ENCODE measurements at regions of chr19 and their contacts with region 1.

Region 1: DNA sequence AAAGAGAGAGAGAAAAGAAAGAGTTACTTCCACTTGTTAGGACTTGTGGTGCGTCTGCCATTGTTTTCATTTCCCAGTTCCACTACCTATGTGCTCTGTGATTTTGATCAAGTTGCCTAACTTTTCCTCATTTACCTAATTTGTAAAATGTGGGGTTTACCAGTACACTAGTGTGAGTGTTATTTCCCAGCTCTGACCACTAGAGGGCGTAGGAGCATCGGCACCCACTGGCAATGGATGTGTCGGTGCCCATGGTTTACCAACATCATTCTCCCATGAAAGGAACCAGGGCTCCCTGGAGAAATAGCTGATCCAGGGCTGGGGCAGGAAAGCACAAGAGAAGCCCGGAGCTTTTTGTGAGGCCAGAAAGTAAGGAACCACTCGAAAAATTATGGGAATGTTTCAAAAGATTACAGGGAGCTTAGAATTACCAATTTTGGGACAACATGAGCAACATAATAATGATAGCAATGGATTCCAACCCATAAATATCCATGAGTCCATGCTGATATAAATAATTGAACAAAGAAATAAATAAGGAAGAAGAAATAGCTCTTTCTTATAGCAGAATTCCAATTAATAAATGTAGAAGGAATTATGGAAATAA is 15.1 kb upstream of the CEACAM4 start:
- DNase-seq: peak; percentile 81
- ATAC-seq: peak; percentile 96
- H3K4me3 Mint-ChIP-seq: no peak overlapping the region
- H3K27ac Mint-ChIP-seq: no peak overlapping the region
- H3K4me1 Mint-ChIP-seq: no peaks in the 10 kb centered on the region
- H3K27me3 Mint-ChIP-seq: no peaks in the 10 kb centered on the region
- CTCF ChIP-seq: peak; percentile 92

Region 2: GRCh38 chr19:41420101-41420880 is 221.7 kb before region 1 on chr19:
- CTCF ChIA-PET with region 1: no interaction called
- POLR2A ChIA-PET with region 1: no interaction called
- DNase-seq: no peak
- ATAC-seq: no peak
- H3K4me3 Mint-ChIP-seq: no peak overlapping the region
- H3K27ac Mint-ChIP-seq: no peak overlapping the region
- H3K4me1 Mint-ChIP-seq: no peaks in the 10 kb centered on the region
- H3K27me3 Mint-ChIP-seq: no peaks in the 10 kb centered on the region
- CTCF ChIP-seq: no peak

Region 3: GRCh38 chr19:41500443-41500842 is 141.5 kb before region 1 on chr19:
- CTCF ChIA-PET with region 1: no interaction called
- POLR2A ChIA-PET with region 1: no interaction called
- DNase-seq: no peak
- ATAC-seq: no peak
- H3K4me3 Mint-ChIP-seq: no peak overlapping the region
- H3K27ac Mint-ChIP-seq: no peak overlapping the region
- H3K4me1 Mint-ChIP-seq: peaks cover 4% of the 10 kb centered on the region; the same call in 1 of the 2 replicates
- H3K27me3 Mint-ChIP-seq: peaks cover 92% of the 10 kb centered on the region
- CTCF ChIP-seq: no peak

Region 4: DNA sequence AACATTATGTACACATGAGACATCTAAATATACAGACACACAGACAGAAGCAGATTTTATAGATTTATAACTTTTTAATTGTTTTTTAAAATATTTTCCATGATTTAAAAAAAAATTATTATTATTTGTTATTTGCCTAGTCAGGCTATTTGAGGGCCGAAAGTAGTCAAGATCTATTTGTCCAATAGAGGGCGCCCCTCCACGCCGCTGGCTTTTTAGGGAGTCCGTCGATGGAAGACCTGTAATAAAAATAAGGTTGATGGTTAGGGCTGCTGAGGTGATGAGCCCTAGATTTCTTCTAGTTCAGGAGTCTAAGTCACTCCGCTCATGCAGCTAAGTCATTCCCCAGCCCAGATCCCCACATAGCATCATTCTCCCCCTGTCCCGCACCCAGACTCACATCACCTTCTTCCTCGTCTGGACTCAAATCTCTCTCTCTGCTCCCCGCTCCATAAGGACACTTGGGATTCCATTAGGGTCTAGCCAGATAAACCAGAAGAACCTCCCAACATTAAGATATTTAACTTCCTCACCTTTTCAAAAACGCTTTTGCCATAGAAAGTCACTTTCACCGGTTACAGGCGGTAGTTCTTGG is 99.9 kb before region 1 on chr19:
- CTCF ChIA-PET with region 1: no interaction called
- POLR2A ChIA-PET with region 1: no interaction called
- DNase-seq: peak; percentile 81
- ATAC-seq: peak; percentile 55
- H3K4me3 Mint-ChIP-seq: no peak overlapping the region
- H3K27ac Mint-ChIP-seq: no peak overlapping the region
- H3K4me1 Mint-ChIP-seq: peaks cover 19% of the 10 kb centered on the region
- H3K27me3 Mint-ChIP-seq: peaks cover 27% of the 10 kb centered on the region
- CTCF ChIP-seq: peak; percentile 62

Region 5: DNA sequence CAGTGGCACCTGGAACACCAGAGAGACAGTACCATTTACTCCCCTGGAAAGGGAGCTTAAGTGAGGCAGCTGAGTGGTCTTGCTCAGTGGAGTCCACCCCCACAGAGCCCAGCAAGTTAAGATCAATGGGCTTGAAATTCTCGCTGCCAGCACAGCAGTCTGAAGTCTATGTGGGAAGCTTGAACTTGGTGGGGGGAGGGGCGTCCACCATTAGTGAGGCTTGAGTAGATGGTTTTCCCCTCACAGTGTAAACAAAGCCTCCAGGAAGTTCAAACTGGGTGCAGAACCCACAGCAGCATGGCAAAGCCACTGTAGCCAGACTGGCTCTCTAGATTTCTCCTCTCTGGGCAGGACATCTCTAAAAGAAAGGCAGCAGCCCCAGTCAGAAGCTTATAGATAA is 15.2 kb after region 1 on chr19:
- CTCF ChIA-PET with region 1: interaction called, 34 read pairs
- POLR2A ChIA-PET with region 1: no interaction called
- DNase-seq: no peak
- ATAC-seq: no peak; the same call in 1 of the 2 replicates
- H3K4me3 Mint-ChIP-seq: no peak overlapping the region
- H3K27ac Mint-ChIP-seq: no peak overlapping the region
- H3K4me1 Mint-ChIP-seq: peaks cover 24% of the 10 kb centered on the region
- H3K27me3 Mint-ChIP-seq: peaks cover 38% of the 10 kb centered on the region
- CTCF ChIP-seq: no peak

Region 6: GRCh38 chr19:41682386-41682785 is 40.4 kb after region 1 on chr19:
- CTCF ChIA-PET with region 1: interaction called, 130 read pairs
- POLR2A ChIA-PET with region 1: no interaction called
- DNase-seq: no peak
- ATAC-seq: no peak
- H3K4me3 Mint-ChIP-seq: no peak overlapping the region
- H3K27ac Mint-ChIP-seq: no peak overlapping the region
- H3K4me1 Mint-ChIP-seq: no peaks in the 10 kb centered on the region
- H3K27me3 Mint-ChIP-seq: peaks cover 27% of the 10 kb centered on the region
- CTCF ChIP-seq: no peak

Region 7: GRCh38 chr19:41691268-41691970 is 49.4 kb after region 1 on chr19:
- CTCF ChIA-PET with region 1: interaction called, 130 read pairs
- POLR2A ChIA-PET with region 1: interaction called, 3 read pairs
- DNase-seq: peak; percentile 69
- ATAC-seq: peak; percentile 86
- H3K4me3 Mint-ChIP-seq: no peak overlapping the region; the same call in 1 of the 2 replicates
- H3K27ac Mint-ChIP-seq: no peak overlapping the region
- H3K4me1 Mint-ChIP-seq: peaks cover 2% of the 10 kb centered on the region; the same call in 1 of the 2 replicates
- H3K27me3 Mint-ChIP-seq: peaks cover 39% of the 10 kb centered on the region
- CTCF ChIP-seq: peak; percentile 61

Region 8: GRCh38 chr19:41701401-41702075 is 59.6 kb after region 1 on chr19:
- CTCF ChIA-PET with region 1: interaction called, 64 read pairs
- POLR2A ChIA-PET with region 1: no interaction called
- DNase-seq: peak; percentile 73
- ATAC-seq: peak; percentile 78
- H3K4me3 Mint-ChIP-seq: no peak overlapping the region
- H3K27ac Mint-ChIP-seq: no peak overlapping the region
- H3K4me1 Mint-ChIP-seq: no peaks in the 10 kb centered on the region
- H3K27me3 Mint-ChIP-seq: peaks cover 13% of the 10 kb centered on the region
- CTCF ChIP-seq: peak; percentile 61

Measured in WTC11 (cell line).